CD14-positive monocyte (primary cell): ENCODE measurements at regions of chr11 and their contacts with region 1.

Region 1: DNA sequence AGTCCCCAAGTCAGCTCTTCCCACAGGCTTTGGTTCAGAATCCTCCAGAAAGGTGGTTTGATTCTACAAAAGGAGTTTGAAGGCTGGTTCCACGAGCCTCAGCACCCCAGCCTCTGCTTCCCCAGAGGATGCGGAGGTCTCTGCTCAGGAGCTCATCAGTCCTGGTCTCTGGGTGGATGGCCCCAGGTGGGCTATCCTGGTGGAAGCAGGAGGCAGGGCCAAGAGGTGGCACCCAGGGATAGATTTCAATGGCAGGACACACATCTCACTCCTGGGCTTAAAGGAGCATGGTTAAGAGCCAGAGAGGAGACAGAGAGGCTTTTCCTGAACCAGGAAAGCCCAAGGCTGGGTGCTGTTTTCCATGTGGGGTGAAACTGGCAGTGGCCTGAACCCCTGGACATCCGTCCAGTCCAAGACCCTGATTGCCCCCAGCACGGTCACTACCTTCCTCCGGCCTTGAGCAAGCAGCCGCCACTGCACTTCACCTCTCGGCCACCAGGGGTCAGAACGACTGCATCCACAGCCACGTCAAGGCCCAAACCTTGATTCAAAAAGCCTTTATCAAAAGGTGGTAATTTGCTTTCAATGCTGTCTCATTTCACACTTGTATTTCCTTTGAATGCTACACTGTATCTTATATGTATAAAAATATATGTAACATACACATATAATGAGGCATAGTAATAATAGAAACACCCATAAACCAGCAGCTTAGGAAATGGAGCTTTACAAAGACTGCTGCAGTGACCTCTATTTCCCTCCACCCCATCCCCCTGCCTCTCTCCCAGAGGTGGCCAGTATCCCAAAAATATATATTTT is 19.3 kb upstream of the FXYD2 start:
- DNase-seq: peak; percentile 69 to 81 (median 70)
- H3K4me3 ChIP-seq: no peak overlapping the region
- H3K4me3 Mint-ChIP-seq: peak overlapping the region in 1 of 2 donors; percentile 35
- H3K27ac ChIP-seq: peak overlapping the region in 1 of 2 donors; percentile 99
- H3K27ac Mint-ChIP-seq: peak overlapping the region; percentile 89 to 100 (median 99)
- H3K4me1 ChIP-seq: peaks cover 51 to 52% of the 10 kb centered on the region in 2 donors
- H3K4me1 Mint-ChIP-seq: peaks cover 51% of the 10 kb centered on the region
- H3K27me3 ChIP-seq: no peaks in the 10 kb centered on the region
- H3K27me3 Mint-ChIP-seq: peaks cover 0 to 2% (median 0%) of the 10 kb centered on the region in 3 donors
- CTCF ChIP-seq: peak; percentile 99

Region 2: GRCh38 chr11:117786135-117786890 is 57.6 kb before region 1 on chr11:
- intact Hi-C with region 1: no loop called
- DNase-seq: no peak
- H3K4me3 ChIP-seq: no peak overlapping the region
- H3K4me3 Mint-ChIP-seq: peak overlapping the region in 1 of 2 donors; percentile 3
- H3K27ac ChIP-seq: no peak overlapping the region
- H3K27ac Mint-ChIP-seq: peak overlapping the region in 1 of 7 donors; percentile 4
- H3K4me1 ChIP-seq: no peaks in the 10 kb centered on the region
- H3K4me1 Mint-ChIP-seq: no peaks in the 10 kb centered on the region
- H3K27me3 ChIP-seq: peaks cover 0 to 16% of the 10 kb centered on the region in 2 donors
- H3K27me3 Mint-ChIP-seq: peaks cover 21 to 42% (median 23%) of the 10 kb centered on the region in 3 donors
- CTCF ChIP-seq: no peak

Region 3: GRCh38 chr11:117807482-117808327 is 36.2 kb before region 1 on chr11:
- intact Hi-C with region 1: loop called in 1 of 2 experiments (anchors 5 kb)
- DNase-seq: peak; percentile 66 to 76 (median 76)
- H3K4me3 ChIP-seq: peak overlapping the region in 1 of 3 experiments; percentile 36
- H3K4me3 Mint-ChIP-seq: peak overlapping the region in 1 of 2 donors; percentile 75
- H3K27ac ChIP-seq: peak overlapping the region; percentile 68 to 85
- H3K27ac Mint-ChIP-seq: peak overlapping the region; percentile 81 to 97 (median 91)
- H3K4me1 ChIP-seq: peaks cover 54 to 56% of the 10 kb centered on the region in 2 donors
- H3K4me1 Mint-ChIP-seq: peaks cover 57% of the 10 kb centered on the region
- H3K27me3 ChIP-seq: no peaks in the 10 kb centered on the region
- H3K27me3 Mint-ChIP-seq: peaks cover 2 to 12% (median 3%) of the 10 kb centered on the region in 3 donors
- CTCF ChIP-seq: peak; percentile 99

Region 4: DNA sequence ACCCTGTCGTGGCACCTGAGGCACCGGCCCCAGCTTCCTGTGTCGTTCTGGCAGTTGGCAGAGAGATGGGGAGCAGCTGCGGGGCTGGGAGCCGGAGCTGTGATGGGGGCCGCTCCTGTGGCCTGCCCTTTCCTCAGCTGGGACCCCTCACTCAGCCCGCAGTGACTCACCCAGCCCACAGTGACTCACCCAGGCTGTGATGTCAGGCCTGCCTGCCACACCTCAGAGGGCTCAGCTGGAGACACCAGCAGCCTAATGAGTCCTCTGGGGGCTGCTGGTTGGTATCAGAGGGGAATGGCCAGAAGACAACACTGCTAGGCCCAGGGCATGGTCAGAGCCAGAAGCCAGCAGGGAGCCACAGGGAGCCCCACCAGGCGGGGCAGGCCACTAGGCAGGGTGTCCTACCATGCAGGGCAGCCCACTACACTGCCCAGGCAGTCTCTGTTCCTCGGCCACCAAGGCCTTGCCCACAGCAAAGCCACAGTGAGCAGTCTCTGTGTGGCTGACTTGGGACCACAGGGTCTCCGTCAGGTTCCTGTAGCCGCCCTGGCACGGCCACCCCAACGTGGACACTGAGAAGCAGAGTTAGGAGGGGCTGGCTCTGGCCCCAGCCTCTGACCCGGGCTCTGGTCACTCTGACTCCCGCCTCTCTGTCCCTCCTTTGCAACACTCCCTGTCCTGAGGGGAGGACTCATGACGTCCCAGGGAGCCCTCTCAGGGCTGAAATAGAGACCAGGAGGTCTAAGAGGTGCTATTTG is 15.1 kb before region 1 on chr11:
- intact Hi-C with region 1: loop called in 1 of 2 experiments (anchors 2 kb)
- DNase-seq: peak; percentile 90 to 95 (median 91)
- H3K4me3 ChIP-seq: no peak overlapping the region
- H3K4me3 Mint-ChIP-seq: peak overlapping the region; percentile 9 to 11
- H3K27ac ChIP-seq: peak overlapping the region; percentile 30 to 82
- H3K27ac Mint-ChIP-seq: peak overlapping the region in 6 of 7 donors; percentile 74 to 89 (median 84)
- H3K4me1 ChIP-seq: peaks cover 67 to 77% of the 10 kb centered on the region in 2 donors
- H3K4me1 Mint-ChIP-seq: peaks cover 78% of the 10 kb centered on the region
- H3K27me3 ChIP-seq: no peaks in the 10 kb centered on the region
- H3K27me3 Mint-ChIP-seq: peaks cover 0 to 4% (median 0%) of the 10 kb centered on the region in 3 donors
- CTCF ChIP-seq: no peak